ENCODE measurements at regions of chr1 and their contacts with region 1.

Region 1: GRCh38 chr1:9376886-9377333 is 84.2 kb downstream of the SPSB1 start:
- DNase-seq: peak in 1 of 2 donors; percentile 96
- H3K4me3 ChIP-seq: no peak overlapping the region
- H3K27ac ChIP-seq: peak overlapping the region; percentile 87
- H3K4me1 ChIP-seq: peaks cover 52% of the 10 kb centered on the region
- H3K27me3 ChIP-seq: no peaks in the 10 kb centered on the region
- CTCF ChIP-seq: no peak
- POLR2A ChIP-seq: no peak

Region 2: GRCh38 chr1:9292361-9293240 is 84.3 kb before region 1 on chr1 and contains the start of gene SPSB1:
- intact Hi-C with region 1: loop called (anchors 2 kb)
- DNase-seq: no peak
- H3K4me3 ChIP-seq: peak within 1 kb of the TSS; percentile 94 to 98
- H3K27ac ChIP-seq: peak within 1 kb of the TSS; percentile 98
- H3K4me1 ChIP-seq: peaks cover 60% of the 10 kb centered on the region
- H3K27me3 ChIP-seq: no peaks in the 10 kb centered on the region
- CTCF ChIP-seq: no peak
- POLR2A ChIP-seq: peak in 1 of 2 donors; percentile 90
- total RNA-seq, gene SPSB1: 40.0 TPM

Region 3: DNA sequence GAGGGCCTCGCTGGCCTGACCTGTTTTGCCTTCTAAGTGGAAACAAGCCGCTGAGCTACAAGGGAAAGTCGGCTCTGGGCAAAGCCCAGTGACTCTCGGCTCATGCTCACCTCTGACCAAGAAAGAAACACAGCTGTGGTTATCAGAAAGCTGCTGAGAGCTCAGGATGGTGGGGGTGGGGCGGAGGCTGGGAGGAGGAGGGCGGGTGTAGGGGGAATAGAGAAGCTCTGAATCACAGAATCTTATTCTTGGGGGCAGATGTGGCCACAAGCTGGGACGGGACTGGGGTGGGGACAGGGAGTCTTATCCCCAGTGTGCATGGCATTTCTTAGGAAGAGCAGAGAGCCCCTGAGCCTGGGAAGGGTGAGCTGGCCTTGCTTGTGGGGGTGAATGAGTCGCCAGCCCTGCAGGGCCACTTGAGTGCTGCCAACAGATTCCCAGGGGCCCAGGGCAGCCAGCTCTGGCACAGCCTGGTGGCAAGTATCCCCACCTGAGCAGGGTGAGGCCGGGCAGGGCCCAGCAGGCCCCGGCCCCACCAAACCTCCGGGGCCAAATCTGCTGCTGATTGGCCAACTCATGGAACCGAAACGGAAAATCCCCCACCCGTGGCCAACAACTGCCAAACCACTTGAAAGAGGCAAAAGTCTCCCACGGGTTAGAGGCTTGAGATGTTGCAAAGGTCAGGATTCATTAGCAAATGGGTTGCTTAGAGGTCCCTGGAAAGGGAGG is 36.4 kb after region 1 on chr1:
- intact Hi-C with region 1: loop called (anchors 5 kb)
- DNase-seq: peak in 1 of 2 donors; percentile 95
- H3K4me3 ChIP-seq: peak overlapping the region in 1 of 2 donors; percentile 2
- H3K27ac ChIP-seq: peak overlapping the region; percentile 90
- H3K4me1 ChIP-seq: peaks cover 32% of the 10 kb centered on the region
- H3K27me3 ChIP-seq: no peaks in the 10 kb centered on the region
- CTCF ChIP-seq: no peak
- POLR2A ChIP-seq: no peak

Region 4: DNA sequence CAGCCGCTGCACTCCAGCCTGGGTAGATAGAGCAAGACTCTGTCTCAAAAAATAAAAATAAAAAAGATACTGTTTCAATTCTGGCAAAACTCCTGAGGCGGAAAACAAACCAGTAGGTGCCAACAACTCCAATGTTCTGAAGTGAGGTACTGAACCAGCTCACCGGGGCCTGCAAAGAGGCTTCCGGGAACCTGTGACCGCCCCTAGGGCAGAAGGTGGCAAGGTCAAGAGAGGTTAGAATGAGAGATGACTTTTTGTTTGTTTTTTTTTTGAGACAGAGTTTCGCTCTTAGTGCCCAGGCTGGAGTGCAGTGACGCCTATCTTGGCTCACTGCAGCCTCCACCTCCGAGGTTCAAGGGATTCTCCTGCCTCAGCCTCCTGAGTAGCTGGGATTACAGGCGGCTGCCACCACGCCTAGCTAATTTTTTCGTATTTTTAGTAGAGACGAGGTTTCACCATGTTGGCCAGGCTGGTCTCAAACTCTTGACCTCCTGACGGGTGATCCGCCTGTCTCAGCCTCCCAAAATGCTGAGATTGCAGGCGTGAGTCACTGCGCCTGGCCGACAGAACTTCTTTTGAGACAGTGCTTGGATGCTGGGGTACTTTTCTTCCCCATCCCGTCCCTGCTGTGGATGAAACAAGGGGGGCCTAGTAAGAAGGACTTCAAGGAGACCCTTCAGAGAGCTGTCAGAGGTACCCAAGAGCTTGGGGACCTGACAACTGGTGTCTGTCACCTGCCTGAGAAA is 70.5 kb after region 1 on chr1:
- intact Hi-C with region 1: loop called (anchors 2 kb)
- DNase-seq: no peak
- H3K4me3 ChIP-seq: no peak overlapping the region
- H3K27ac ChIP-seq: no peak overlapping the region
- H3K4me1 ChIP-seq: peaks cover 30% of the 10 kb centered on the region
- H3K27me3 ChIP-seq: no peaks in the 10 kb centered on the region
- CTCF ChIP-seq: no peak
- POLR2A ChIP-seq: no peak